Activated CD4-positive, alpha-beta T cell treated with anti-CD3 and anti-CD28 coated beads for 36 hours (primary cell): ENCODE measurements at regions of chr19 and their contacts with region 1.

Region 1: DNA sequence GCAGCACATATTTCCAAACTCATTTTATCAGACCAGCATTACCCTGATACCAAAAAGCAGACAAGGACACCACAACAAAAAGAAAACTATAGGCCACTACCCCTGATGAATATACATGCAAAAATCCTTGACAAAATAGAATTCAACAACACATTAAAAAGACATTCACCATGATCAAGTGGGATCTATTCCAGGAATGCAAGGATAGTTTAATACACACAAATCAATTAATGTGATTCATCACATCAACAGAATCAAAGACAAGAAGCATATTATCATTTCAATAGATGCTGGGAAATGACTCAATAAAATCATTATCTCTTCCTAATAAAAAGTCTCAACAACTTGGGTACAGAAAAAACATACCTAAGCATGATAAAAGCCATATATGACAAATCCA is 11.2 kb downstream of the ZNF347 start:
- DNase-seq: no peak
- ATAC-seq: no peak
- H3K4me3 Mint-ChIP-seq: no peak overlapping the region
- H3K27ac Mint-ChIP-seq: no peak overlapping the region
- H3K4me1 Mint-ChIP-seq: no peaks in the 10 kb centered on the region
- H3K27me3 Mint-ChIP-seq: no peaks in the 10 kb centered on the region

Region 2: DNA sequence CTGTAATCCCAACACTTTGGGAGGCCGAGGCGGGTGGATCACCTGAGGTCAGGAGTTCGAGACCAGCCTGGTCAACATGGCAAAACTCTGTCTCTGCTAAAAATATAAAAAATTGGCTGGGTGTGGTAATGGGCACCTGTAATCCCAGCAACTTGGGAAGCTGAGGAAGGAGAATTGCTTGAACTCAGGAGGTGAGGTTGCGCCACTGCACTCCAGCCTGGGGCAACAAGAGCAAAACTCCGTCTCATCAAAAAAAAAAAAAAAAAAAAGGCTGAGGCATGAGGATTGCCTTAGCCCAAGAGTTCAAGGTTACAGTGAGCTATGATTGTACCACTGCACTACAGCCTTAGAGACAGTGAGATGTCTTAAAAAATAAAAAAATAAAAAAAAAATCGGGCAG is 76.4 kb before region 1 on chr19:
- CTCF ChIA-PET with region 1: no interaction called
- POLR2A ChIA-PET with region 1: no interaction called
- intact Hi-C with region 1: loop called in 1 of 2 experiments (anchors 2 kb)
- DNase-seq: no peak
- ATAC-seq: no peak
- H3K4me3 Mint-ChIP-seq: no peak overlapping the region
- H3K27ac Mint-ChIP-seq: no peak overlapping the region
- H3K4me1 Mint-ChIP-seq: no peaks in the 10 kb centered on the region
- H3K27me3 Mint-ChIP-seq: no peaks in the 10 kb centered on the region